SK-N-SH (cell line): ENCODE measurements at regions of chr12 and their contacts with region 1.

Region 1: DNA sequence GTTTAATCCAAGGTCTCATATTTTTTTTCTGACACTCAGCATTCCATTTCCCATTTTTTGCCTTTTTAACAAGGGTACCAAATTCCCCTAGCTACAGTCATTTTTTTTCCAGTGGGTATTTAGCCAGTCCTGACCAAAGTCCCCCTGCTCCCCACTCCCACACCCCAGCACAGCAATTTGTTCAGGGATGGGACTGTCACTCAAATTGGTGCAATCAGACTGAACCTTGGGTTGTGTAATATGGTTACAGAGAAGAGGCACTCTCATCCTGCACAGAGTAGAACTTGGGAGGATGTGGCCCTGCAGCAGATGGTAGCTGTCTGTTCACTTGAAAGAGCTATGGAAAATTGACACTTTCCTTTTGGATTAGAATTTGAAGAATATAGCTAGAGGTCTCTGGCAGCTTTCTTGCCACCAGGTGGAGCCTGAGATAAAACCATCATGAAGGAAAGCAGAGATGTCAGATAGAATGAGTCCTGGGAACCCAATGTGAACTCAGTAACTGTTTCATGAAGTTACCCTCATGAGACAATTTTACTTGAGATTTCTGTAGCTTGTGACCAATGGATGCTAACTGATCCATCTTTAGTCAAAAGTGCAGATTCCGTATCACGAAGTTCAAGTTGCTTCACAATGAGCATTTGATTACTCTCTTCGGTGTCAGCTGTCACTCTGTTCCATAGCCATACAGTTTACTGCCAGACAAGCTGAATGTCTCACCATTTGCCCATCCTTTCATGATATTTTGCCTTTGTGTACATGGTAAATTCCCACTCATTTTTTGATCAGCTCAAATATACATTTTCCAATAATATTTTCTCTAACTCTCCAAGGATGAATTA is 394.0 kb upstream of the SYT1 start:
- DNase-seq: peak; percentile 6
- H3K4me3 ChIP-seq: no peak overlapping the region; a peak in 1 of 4 replicates
- H3K27ac ChIP-seq: no peak overlapping the region
- H3K4me1 ChIP-seq: peaks cover 0 to 4% of the 10 kb centered on the region in 2 experiments; a peak in 2 of 4 replicates
- H3K27me3 ChIP-seq: no peaks in the 10 kb centered on the region
- CTCF ChIP-seq: peak; percentile 75
- EP300 ChIP-seq: no peak
- RAD21 ChIP-seq: peak; percentile 68

Region 2: GRCh38 chr12:79006306-79006705 is 535.7 kb after region 1 on chr12:
- CTCF ChIA-PET with region 1: interaction called, 11 read pairs
- POLR2A ChIA-PET with region 1: no interaction called
- DNase-seq: no peak
- H3K4me3 ChIP-seq: no peak overlapping the region
- H3K27ac ChIP-seq: no peak overlapping the region
- H3K4me1 ChIP-seq: peaks cover 0 to 4% of the 10 kb centered on the region in 2 experiments; a peak in 3 of 4 replicates
- H3K27me3 ChIP-seq: no peaks in the 10 kb centered on the region
- CTCF ChIP-seq: peak; percentile 46
- EP300 ChIP-seq: no peak
- RAD21 ChIP-seq: peak; percentile 65

Region 3: DNA sequence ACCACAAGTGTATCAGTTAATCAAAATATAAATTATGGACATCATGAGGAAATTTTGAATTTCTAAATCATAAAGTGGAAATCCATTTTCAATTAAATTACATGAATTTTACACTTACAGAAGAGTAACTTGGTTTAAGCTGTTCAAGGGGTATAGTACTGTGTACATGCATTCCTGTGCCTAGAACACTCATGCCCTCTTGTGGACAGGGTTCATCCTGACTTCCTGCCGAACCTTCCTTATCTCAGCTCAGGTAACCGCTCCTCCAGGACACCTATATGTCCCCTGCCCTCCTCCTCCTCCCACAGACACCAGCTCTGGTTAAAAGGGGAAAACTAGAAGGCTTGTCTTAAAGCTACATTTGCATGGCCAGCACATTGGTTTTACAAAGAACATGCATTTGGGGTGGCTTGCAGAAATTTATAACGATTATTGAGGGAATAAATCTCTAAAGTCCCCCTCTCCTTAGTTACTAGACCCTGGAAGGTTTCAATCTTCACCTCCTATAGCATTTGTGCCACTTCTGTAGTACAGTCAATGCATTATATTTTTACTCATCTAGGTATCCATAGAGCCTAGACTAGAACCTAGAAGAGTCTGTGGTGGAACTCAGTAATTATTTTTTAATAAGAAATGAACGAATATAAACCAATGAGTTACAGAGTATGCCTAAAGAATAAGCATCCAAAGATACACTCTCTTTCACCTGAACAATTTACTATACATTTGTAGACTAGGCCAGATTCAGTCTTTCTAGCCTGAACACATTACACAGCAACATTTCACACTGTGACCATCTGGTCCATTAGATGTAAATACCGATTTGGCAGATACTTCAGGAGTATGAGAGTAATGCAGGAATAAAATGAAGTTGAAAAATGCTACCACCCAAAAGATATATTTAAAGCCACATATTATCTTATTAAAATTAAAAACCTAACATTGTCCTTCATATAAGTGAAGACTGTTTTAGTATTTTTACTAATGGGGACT is 874.6 kb after region 1 on chr12:
- CTCF ChIA-PET with region 1: interaction called, 11 read pairs
- POLR2A ChIA-PET with region 1: no interaction called
- DNase-seq: peak; percentile 42
- H3K4me3 ChIP-seq: no peak overlapping the region; a peak in 1 of 4 replicates
- H3K27ac ChIP-seq: no peak overlapping the region
- H3K4me1 ChIP-seq: no peaks in the 10 kb centered on the region
- H3K27me3 ChIP-seq: no peaks in the 10 kb centered on the region
- CTCF ChIP-seq: peak; percentile 62
- EP300 ChIP-seq: no peak
- RAD21 ChIP-seq: peak; percentile 88